ENCODE measurements at regions of chr20 and their contacts with region 1.

Region 1: GRCh38 chr20:51631011-51631950 is 88.8 kb upstream of the NFATC2 start:
- DNase-seq: peak; percentile 67
- ATAC-seq: peak; percentile 56
- H3K4me3 Mint-ChIP-seq: no peak overlapping the region
- H3K27ac Mint-ChIP-seq: peak overlapping the region; percentile 18
- H3K4me1 Mint-ChIP-seq: peaks cover 50% of the 10 kb centered on the region
- H3K27me3 Mint-ChIP-seq: peaks cover 20% of the 10 kb centered on the region

Region 2: GRCh38 chr20:51447097-51447771 is 184.0 kb before region 1 on chr20:
- CTCF ChIA-PET with region 1: no interaction called
- POLR2A ChIA-PET with region 1: no interaction called
- intact Hi-C with region 1: no loop called
- DNase-seq: no peak
- ATAC-seq: no peak
- H3K4me3 Mint-ChIP-seq: no peak overlapping the region
- H3K27ac Mint-ChIP-seq: peak overlapping the region; percentile 60
- H3K4me1 Mint-ChIP-seq: peaks cover 46% of the 10 kb centered on the region
- H3K27me3 Mint-ChIP-seq: no peaks in the 10 kb centered on the region

Region 3: GRCh38 chr20:51661609-51662178 is 30.4 kb after region 1 on chr20:
- CTCF ChIA-PET with region 1: no interaction called
- POLR2A ChIA-PET with region 1: no interaction called
- intact Hi-C with region 1: loop called (anchors 2 kb)
- DNase-seq: peak; percentile 65
- ATAC-seq: peak; percentile 91
- H3K4me3 Mint-ChIP-seq: no peak overlapping the region
- H3K27ac Mint-ChIP-seq: no peak overlapping the region
- H3K4me1 Mint-ChIP-seq: peaks cover 19% of the 10 kb centered on the region
- H3K27me3 Mint-ChIP-seq: peaks cover 7% of the 10 kb centered on the region

Measured in activated CD4-positive, alpha-beta T cell treated with anti-CD3 and anti-CD28 coated beads for 36 hours (primary cell).